ENCODE measurements at regions of chr21 and their contacts with region 1.

Region 1: DNA sequence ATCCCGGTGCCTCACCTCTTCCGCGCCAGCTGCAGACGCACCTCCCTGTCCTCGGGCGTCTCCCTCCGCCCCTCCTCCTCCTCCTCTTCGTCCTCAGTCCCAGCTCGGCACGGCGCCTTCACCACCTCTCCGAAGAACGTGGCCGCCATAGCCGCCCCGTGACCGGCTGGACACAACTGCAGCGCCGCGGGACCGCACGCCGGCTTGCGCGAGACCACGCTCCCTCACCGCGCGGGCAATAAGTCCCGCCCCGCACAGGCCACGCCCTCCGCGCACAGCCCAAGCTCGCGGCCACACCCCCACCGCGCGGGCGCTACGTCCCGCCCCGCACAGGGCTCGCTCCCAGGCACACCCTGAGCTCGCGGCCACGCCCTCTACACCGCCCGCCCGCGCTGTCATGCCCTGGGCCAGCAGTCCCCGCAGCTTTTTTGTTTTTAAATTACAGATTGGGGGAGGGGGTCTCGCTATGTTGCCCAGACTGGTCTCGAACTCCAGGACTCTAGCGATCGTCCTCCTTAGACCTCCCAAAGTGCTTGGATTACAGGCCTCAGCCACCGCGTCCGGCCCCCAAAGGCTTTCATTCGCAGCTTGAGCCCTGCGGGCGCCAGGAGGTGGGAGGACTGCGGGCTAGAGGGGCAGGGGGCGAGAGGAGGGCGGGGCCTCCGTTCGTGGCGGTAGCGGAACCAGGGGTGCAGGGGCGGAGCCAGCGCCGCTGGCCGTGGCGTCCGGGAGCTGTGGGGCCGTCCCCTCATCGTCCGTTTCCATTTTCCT is at the start of gene PSMG1:
- DNase-seq: peak; percentile 95
- ATAC-seq: peak; percentile 91
- H3K4me3 Mint-ChIP-seq: peak within 1 kb of the TSS; percentile 87
- H3K27ac Mint-ChIP-seq: peak within 1 kb of the TSS; percentile 95
- H3K4me1 Mint-ChIP-seq: peaks cover 52% of the 10 kb centered on the region
- H3K27me3 Mint-ChIP-seq: no peaks in the 10 kb centered on the region
- CTCF ChIP-seq: no peak
- total RNA-seq, gene PSMG1: 90.9 to 107 TPM

Region 2: DNA sequence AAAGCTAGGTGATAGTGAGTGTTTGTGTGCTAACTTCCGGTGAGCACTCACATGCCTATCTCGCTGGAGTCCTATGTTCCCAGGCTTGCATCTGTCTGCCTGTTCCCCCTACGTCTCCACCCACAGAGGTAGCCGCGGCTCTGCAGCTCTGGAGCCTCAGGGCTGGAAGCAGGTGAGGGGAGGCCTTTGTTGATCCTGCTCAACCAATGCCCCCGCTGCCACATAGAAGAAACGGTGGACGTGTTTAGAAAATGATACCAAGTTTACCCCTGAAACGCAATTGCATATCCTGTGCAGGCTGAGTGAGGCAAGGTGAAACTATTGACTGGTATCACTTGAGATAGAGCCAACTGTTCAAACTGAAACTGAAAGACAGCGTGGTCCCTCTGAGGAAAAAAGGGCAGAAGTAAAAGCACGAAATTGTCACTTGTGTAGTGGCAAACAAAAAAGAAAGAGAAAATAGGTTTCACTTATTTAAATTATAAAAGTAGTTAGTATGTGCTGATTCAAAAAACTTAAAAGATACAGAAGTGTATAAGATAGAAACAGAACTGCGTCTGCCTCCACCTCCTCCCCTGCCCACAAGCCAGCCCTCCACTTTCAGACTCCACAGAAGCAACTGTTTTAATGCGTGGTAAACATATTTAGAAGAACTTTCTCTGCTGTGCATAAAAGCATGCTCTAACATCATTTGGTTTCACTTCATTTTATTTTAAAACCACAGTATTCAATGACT is 416.3 kb before region 1 on chr21:
- CTCF ChIA-PET with region 1: no interaction called
- POLR2A ChIA-PET with region 1: interaction called, 3 read pairs
- intact Hi-C with region 1: loop called (anchors 10 kb)
- DNase-seq: peak; percentile 81
- ATAC-seq: peak; percentile 80
- H3K4me3 Mint-ChIP-seq: peak overlapping the region; percentile 64
- H3K27ac Mint-ChIP-seq: peak overlapping the region; percentile 95
- H3K4me1 Mint-ChIP-seq: peaks cover 40% of the 10 kb centered on the region
- H3K27me3 Mint-ChIP-seq: no peaks in the 10 kb centered on the region
- CTCF ChIP-seq: no peak

Region 3: DNA sequence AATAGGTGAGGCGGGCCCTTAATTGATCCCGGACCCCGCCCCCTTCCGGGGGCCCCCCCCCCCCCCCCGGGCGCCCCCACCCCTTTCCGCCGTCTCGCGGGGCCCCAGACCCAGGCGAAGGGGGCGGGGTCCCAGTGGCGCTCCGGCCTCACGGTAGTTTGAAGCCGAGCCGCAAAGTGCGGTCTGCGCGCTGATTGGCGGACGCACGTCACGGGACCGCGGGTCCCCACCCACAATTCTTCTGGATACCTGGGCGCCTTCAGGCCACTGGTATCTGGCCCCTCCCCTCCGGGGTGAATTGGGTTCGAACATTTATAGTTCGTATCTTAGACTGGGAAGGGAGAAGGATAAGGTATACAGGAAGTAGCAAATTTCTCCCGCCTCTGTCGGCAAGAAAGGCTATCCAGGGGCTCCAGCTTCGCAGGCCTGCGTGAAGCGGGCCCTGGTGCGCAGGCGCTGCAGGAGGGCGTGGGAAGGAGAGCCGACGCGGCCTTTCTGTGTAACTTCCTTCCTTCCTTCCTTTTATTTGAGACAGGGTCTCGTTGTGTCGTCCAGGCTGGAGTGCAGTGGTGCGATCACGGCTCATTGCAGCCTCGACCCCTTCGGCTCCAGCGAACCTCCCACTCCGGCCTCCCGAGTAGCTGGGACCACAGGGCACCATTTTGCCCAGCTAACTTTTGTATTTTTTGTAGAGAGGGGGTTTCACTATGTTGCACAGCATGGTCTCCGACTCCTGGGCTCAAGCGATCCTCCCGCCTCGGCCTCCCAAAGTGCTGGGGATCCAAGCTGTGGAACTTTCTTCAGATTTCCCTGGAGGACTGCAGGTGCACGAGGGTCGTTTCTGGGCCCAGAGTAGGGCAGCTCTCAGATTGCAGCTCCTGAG is 166.0 kb after region 1 on chr21:
- CTCF ChIA-PET with region 1: no interaction called
- POLR2A ChIA-PET with region 1: interaction called, 16 read pairs
- intact Hi-C with region 1: no loop called
- DNase-seq: peak; percentile 98
- ATAC-seq: peak; percentile 87
- H3K4me3 Mint-ChIP-seq: peak overlapping the region; percentile 92
- H3K27ac Mint-ChIP-seq: peak overlapping the region; percentile 100
- H3K4me1 Mint-ChIP-seq: peaks cover 32% of the 10 kb centered on the region
- H3K27me3 Mint-ChIP-seq: no peaks in the 10 kb centered on the region
- CTCF ChIP-seq: no peak

Region 4: GRCh38 chr21:39388038-39388810 is 204.8 kb after region 1 on chr21:
- CTCF ChIA-PET with region 1: interaction called, 5 read pairs
- POLR2A ChIA-PET with region 1: interaction called, 6 read pairs
- intact Hi-C with region 1: loop called (anchors 10 kb)
- DNase-seq: peak; percentile 93
- ATAC-seq: peak; percentile 75
- H3K4me3 Mint-ChIP-seq: peak overlapping the region; percentile 77
- H3K27ac Mint-ChIP-seq: peak overlapping the region; percentile 92
- H3K4me1 Mint-ChIP-seq: peaks cover 34% of the 10 kb centered on the region
- H3K27me3 Mint-ChIP-seq: no peaks in the 10 kb centered on the region
- CTCF ChIP-seq: peak; percentile 98